PC-9 (cell line): ENCODE measurements at regions of chr6 and their contacts with region 1.

Region 1: DNA sequence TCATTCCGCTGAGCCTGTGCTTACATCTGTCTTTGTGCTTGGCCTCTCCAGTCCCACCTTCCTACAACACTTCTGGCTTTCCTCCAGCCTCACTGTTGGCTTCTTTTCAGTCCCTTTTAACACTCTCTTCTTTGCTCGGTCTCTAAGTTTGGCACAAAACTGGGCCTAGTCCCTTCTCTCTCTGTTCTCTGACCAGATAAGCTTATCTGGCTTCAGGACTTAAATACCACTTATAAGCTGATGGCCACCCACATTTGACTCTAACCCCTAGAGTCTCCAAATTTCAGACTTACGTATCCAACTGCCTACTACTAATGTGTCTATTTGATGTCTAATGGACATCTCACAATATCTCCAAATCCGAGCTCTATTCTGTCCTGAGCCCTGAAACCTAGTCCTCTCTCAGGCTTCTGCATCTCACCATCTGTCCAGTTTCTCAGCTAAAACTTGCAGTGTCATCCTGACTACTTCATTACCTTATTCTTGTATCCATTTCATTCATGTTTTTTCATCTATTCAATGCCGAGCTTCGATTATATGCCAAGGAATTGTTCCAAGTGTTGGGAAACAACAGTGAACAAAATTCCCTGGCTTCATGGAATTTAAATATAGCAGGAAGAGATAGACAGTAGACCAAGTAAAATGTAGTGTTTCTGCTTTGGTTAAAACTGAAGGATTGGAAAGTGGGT is 40.1 kb downstream of the TBPL1 start:
- DNase-seq: no peak
- H3K4me3 ChIP-seq: no peak overlapping the region
- H3K27ac ChIP-seq: no peak overlapping the region
- H3K4me1 ChIP-seq: peaks cover 46% of the 10 kb centered on the region
- H3K27me3 ChIP-seq: no peaks in the 10 kb centered on the region
- CTCF ChIP-seq: no peak

Region 2: DNA sequence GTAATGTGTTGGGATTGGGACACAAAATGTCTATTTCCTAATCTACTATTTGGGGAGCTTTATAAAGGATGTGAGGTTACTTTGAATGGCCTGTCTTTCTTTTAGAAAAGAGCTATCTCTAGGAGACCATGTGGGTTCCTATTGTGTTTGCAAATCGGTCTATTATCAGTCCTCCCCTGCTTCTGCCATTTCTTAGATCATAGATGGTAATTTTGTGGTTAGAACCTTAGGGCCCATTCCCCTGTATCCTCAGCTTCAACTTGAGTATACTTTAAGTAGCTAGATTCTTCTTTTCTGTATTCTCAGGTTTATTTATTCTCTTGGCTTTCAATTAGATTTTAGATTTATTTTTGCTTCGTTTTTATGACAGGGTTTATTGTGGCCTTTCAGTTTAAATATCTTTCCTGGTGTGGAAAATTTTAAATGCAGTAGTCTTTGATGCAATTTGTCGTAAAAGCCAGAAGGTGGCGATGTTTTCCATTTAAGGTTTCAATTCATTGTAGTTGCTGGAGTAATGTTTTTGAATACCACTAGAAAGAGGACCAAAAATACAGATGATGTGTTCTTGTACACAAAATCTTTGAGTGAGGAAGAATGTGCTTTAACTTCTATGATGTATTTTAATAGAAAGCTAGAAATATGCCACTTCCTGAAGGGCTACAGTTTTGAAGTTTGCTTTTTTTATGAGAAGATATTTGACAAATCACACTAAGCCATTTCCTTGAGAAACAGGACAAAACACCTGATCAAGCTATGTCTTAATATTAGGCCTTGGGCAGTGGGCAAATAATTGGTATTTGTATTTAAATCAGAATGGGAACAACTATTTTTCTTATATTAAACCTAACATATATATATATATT is 19.8 kb before region 1 on chr6:
- CTCF ChIA-PET with region 1: no interaction called
- POLR2A ChIA-PET with region 1: interaction called, 20 read pairs
- intact Hi-C with region 1: no loop called
- DNase-seq: peak in 1 of 2 experiments; percentile 59
- H3K4me3 ChIP-seq: no peak overlapping the region
- H3K27ac ChIP-seq: peak overlapping the region; percentile 35
- H3K4me1 ChIP-seq: peaks cover 6% of the 10 kb centered on the region
- H3K27me3 ChIP-seq: no peaks in the 10 kb centered on the region
- CTCF ChIP-seq: peak; percentile 98

Region 3: DNA sequence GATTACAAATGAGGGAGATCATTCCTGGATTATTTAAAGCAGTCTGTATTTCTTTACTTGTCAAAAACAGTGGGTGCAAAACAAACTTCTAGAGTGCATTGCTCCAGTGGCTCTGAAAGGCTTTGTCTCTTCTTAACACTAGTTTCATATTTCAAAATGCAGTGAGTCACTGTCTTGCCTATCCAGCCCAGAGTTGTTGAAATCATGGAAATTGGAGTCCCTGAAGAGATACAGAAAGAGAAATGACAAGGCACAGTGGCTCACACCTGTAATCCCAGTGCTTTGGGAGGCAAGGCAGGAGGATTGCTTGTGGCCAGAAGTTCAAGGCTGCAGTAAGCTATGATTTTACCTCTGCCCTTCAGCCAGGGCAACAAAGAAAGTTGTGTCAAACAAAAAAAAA is 48.0 kb after region 1 on chr6:
- CTCF ChIA-PET with region 1: interaction called, 12 read pairs
- POLR2A ChIA-PET with region 1: interaction called, 3 read pairs
- intact Hi-C with region 1: no loop called
- DNase-seq: peak; percentile 33 to 89
- H3K4me3 ChIP-seq: no peak overlapping the region
- H3K27ac ChIP-seq: peak overlapping the region; percentile 65
- H3K4me1 ChIP-seq: peaks cover 27% of the 10 kb centered on the region
- H3K27me3 ChIP-seq: no peaks in the 10 kb centered on the region
- CTCF ChIP-seq: no peak